ENCODE measurements at regions of chr7 and their contacts with region 1.

Region 1: DNA sequence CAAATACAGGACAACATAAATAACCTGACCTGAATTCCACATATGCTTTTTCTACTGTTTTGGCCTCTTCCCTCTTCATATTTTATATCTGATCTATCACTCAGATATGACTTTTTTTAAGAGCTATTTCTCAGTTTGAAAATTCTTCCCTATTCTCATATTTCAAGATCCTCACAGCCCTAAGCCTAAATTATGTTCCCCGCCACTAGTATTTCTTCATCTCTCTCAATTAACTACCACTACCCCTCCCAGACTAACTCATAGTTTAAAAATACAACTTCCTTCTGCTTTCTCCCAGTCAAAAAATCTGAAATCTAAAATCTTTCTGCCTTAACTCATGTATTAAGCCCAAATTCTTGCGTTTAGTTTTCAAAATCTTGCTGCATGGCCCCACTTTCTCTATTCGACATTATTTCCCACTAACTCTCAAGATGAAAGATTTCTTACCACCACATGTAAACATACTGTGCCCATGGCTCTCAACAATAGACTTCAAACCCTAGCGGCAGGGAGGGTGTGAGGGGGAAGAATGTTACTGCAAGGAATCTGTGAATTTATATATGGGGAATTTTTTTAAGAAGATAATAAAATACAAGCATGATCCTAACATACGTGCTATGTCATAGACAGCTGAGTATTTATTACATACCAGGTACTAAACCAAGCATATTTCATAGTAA is 64.6 kb downstream of the TFEC start:
- DNase-seq: no peak
- H3K4me3 ChIP-seq: no peak overlapping the region
- H3K27ac ChIP-seq: no peak overlapping the region
- H3K4me1 ChIP-seq: peaks cover 0 to 7% (median 0%) of the 10 kb centered on the region in 4 experiments
- H3K27me3 ChIP-seq: no peaks in the 10 kb centered on the region

Region 2: GRCh38 chr7:116565981-116566380 is 600.0 kb after region 1 on chr7:
- CTCF ChIA-PET with region 1: no interaction called
- POLR2A ChIA-PET with region 1: interaction called, 12 read pairs
- DNase-seq: no peak
- H3K4me3 ChIP-seq: no peak overlapping the region
- H3K27ac ChIP-seq: no peak overlapping the region
- H3K4me1 ChIP-seq: no peaks in the 10 kb centered on the region
- H3K27me3 ChIP-seq: no peaks in the 10 kb centered on the region

Measured in common myeloid progenitor, CD34-positive (primary cell).